Activated CD4-positive, alpha-beta T cell treated with anti-CD3 and anti-CD28 coated beads for 36 hours (primary cell): ENCODE measurements at regions of chr17 and their contacts with region 1.

Region 1: DNA sequence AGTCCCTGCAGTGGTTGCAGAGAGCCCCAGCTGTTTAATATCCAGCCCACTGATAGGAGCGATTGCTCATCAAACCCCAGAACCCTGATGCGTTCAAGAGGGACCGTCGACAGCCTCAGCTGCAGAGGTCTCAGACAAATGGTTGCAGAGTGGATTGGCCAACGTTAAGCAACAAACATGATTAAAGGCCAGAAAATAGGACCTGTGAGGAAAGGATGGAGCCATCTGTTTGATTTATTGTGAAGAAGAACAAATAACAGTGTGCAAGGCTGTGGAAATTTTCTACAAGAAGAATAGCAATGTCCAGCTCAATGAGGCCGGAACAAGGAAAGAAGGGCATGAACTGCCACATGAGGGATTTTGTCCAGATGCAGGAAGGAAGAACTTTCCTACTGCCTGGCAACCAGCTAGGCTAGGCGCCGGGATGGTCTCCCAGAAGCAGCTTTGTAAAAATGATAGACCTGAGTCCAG is 138.4 kb upstream of the DNAH9 start:
- DNase-seq: no peak
- ATAC-seq: no peak
- H3K4me3 Mint-ChIP-seq: no peak overlapping the region
- H3K27ac Mint-ChIP-seq: no peak overlapping the region
- H3K4me1 Mint-ChIP-seq: no peaks in the 10 kb centered on the region
- H3K27me3 Mint-ChIP-seq: no peaks in the 10 kb centered on the region

Region 2: DNA sequence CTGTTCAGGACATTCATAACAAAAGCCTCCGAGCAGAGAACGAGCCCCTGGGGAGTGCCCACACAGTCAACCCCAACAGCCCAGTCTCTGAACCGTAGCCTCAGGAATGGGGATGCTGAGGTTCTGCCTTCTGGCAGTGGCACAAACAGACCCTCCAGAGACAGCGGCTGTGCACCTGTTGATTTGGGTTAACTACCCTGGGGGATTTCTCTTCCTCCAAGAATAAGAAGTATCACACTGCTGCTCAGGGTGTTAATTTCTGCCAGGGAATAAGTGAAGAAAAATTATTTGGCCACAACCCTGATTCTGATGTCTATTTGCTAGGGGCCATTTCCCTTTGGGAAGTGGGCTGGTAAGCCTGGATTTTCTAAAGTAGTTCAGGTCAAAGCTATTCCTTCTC is 571.0 kb before region 1 on chr17:
- CTCF ChIA-PET with region 1: no interaction called
- POLR2A ChIA-PET with region 1: no interaction called
- intact Hi-C with region 1: loop called in 1 of 2 experiments (anchors 10 kb)
- DNase-seq: no peak
- ATAC-seq: no peak
- H3K4me3 Mint-ChIP-seq: no peak overlapping the region
- H3K27ac Mint-ChIP-seq: no peak overlapping the region
- H3K4me1 Mint-ChIP-seq: no peaks in the 10 kb centered on the region
- H3K27me3 Mint-ChIP-seq: peaks cover 9% of the 10 kb centered on the region

Region 3: GRCh38 chr17:11212792-11213191 is 247.1 kb before region 1 on chr17:
- CTCF ChIA-PET with region 1: no interaction called
- POLR2A ChIA-PET with region 1: no interaction called
- intact Hi-C with region 1: loop called in 1 of 2 experiments (anchors 10 kb)
- DNase-seq: no peak
- ATAC-seq: no peak
- H3K4me3 Mint-ChIP-seq: no peak overlapping the region
- H3K27ac Mint-ChIP-seq: no peak overlapping the region
- H3K4me1 Mint-ChIP-seq: no peaks in the 10 kb centered on the region
- H3K27me3 Mint-ChIP-seq: no peaks in the 10 kb centered on the region

Region 4: DNA sequence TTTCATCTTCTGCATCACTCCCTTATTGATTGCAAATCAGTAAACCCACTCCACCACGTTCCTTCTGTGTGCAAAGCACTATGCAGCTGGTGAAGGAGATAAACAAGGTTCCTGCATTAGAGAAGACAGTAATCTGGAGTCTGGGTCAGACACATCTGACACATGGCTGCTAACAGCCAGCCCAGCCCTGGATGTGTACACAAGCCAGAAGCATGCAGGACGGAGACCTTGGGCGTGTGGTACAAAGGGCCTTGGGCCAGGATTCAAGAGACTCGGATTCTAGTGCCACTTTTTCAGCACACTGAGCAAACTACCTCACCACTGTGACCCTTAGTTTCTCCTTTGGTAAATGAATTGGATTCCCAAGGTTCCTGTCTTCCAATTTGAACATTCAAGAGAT is 51.8 kb after region 1 on chr17:
- CTCF ChIA-PET with region 1: no interaction called
- POLR2A ChIA-PET with region 1: no interaction called
- intact Hi-C with region 1: no loop called
- DNase-seq: no peak
- ATAC-seq: no peak
- H3K4me3 Mint-ChIP-seq: no peak overlapping the region
- H3K27ac Mint-ChIP-seq: no peak overlapping the region
- H3K4me1 Mint-ChIP-seq: no peaks in the 10 kb centered on the region
- H3K27me3 Mint-ChIP-seq: no peaks in the 10 kb centered on the region